ENCODE measurements at regions of chr5 and their contacts with region 1.

Region 1: GRCh38 chr5:3595006-3595961 is at the start of gene IRX1:
- DNase-seq: peak; percentile 80
- H3K4me3 Mint-ChIP-seq: peak within 1 kb of the TSS; percentile 79
- H3K27ac Mint-ChIP-seq: peak within 1 kb of the TSS; percentile 93
- H3K4me1 Mint-ChIP-seq: peaks cover 8% of the 10 kb centered on the region
- H3K27me3 Mint-ChIP-seq: no peaks in the 10 kb centered on the region
- CTCF ChIP-seq: no peak
- total RNA-seq, gene IRX1: 13.8 and 15.5 TPM in 2 replicates

Region 2: DNA sequence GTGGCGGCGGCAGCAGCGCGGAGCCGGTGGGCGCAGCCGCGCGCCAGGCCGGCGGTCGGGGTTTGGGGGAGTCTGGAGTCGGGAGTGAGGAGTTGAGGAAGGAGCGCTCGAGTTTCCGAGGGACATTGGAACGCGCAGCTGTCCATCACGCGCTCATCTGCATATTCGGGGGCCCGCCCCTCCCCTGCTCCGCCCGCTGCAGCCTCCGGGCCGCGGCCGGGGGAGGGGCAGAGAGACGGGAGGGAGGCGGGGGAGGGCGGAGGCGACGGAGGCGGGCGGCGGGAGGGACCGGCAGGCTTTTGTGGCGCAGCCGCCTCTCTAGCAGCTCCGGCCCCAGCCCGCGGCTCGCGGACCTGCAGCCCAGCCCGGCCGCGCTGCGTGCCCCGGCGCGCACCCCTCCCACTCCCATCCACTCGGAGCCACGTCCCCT is 843.7 kb before region 1 on chr5 and contains the start of gene IRX2:
- CTCF ChIA-PET with region 1: no interaction called
- POLR2A ChIA-PET with region 1: interaction called, 43 read pairs
- intact Hi-C with region 1: loop called (anchors 2 kb)
- DNase-seq: peak; percentile 97
- H3K4me3 Mint-ChIP-seq: peak within 1 kb of the TSS; percentile 82
- H3K27ac Mint-ChIP-seq: peak within 1 kb of the TSS; percentile 95
- H3K4me1 Mint-ChIP-seq: peaks cover 12% of the 10 kb centered on the region
- H3K27me3 Mint-ChIP-seq: no peaks in the 10 kb centered on the region
- CTCF ChIP-seq: no peak
- total RNA-seq, gene IRX2: 35.4 and 43.4 TPM in 2 replicates

Region 3: GRCh38 chr5:3310541-3311261 is 284.6 kb before region 1 on chr5:
- CTCF ChIA-PET with region 1: no interaction called
- POLR2A ChIA-PET with region 1: interaction called, 3 read pairs
- intact Hi-C with region 1: loop called (anchors 5 kb)
- DNase-seq: peak; percentile 93
- H3K4me3 Mint-ChIP-seq: peak overlapping the region; percentile 65
- H3K27ac Mint-ChIP-seq: peak overlapping the region; percentile 97
- H3K4me1 Mint-ChIP-seq: peaks cover 24% of the 10 kb centered on the region
- H3K27me3 Mint-ChIP-seq: no peaks in the 10 kb centered on the region
- CTCF ChIP-seq: no peak

Region 4: DNA sequence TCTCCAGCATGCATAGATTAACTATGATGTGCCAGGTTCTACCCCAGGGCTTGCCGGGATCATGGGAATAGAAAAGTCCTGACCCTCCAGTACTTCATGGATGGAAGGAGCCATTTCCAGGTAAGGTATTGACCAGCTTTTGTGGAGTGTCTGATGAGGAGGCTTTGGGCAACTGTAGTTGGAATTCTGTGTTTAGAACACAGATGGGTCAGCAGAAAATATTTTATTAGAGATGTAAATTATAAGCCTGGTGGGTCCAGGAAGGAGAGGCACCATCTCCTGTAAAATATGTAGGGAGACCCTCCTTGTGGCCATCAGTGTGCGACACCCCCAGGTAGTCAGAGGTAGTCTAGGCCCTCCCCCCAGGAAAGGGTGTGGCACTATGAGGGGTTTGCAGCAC is 156.6 kb after region 1 on chr5:
- CTCF ChIA-PET with region 1: no interaction called
- POLR2A ChIA-PET with region 1: no interaction called
- intact Hi-C with region 1: no loop called
- DNase-seq: no peak
- H3K4me3 Mint-ChIP-seq: no peak overlapping the region
- H3K27ac Mint-ChIP-seq: no peak overlapping the region
- H3K4me1 Mint-ChIP-seq: no peaks in the 10 kb centered on the region
- H3K27me3 Mint-ChIP-seq: no peaks in the 10 kb centered on the region
- CTCF ChIP-seq: no peak

Region 5: GRCh38 chr5:4511996-4512662 is 916.8 kb after region 1 on chr5:
- CTCF ChIA-PET with region 1: no interaction called
- POLR2A ChIA-PET with region 1: interaction called, 3 read pairs
- intact Hi-C with region 1: loop called (anchors 5 kb)
- DNase-seq: peak; percentile 54
- H3K4me3 Mint-ChIP-seq: peak overlapping the region; percentile 69
- H3K27ac Mint-ChIP-seq: no peak overlapping the region
- H3K4me1 Mint-ChIP-seq: peaks cover 6% of the 10 kb centered on the region
- H3K27me3 Mint-ChIP-seq: no peaks in the 10 kb centered on the region
- CTCF ChIP-seq: peak; percentile 61

Region 6: DNA sequence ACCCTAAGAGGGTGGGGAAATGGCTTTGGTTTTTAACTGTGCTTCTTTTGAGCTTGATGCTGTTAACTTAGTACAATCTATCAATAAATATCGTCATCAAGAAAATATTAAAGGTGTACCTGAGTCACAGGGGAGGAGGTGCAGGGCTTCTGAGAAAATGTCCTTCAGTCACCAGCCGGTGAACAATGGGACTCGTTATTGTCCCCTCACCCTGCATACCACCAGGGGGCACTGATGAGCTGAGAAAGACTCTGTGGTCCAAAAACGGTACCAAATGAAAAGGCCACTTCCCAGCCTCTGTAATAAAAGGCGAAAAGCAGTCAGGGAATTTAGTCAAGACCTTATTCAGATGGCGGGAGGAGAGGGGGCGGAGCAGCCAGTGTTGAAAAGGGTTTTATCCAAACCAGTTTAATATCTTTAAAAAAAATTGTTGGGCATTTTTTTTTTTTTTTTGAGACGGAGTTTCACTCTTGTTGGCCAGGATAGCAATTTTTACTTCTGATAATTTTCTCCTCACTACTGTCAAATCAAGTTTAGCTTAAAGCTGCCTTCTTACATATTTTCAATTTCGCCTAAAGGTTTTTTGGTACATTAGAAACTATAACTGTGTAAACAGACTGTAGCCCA is 1272.9 kb after region 1 on chr5:
- CTCF ChIA-PET with region 1: no interaction called
- POLR2A ChIA-PET with region 1: no interaction called
- intact Hi-C with region 1: loop called (anchors 10 kb)
- DNase-seq: peak; percentile 71
- H3K4me3 Mint-ChIP-seq: peak overlapping the region; percentile 35
- H3K27ac Mint-ChIP-seq: no peak overlapping the region
- H3K4me1 Mint-ChIP-seq: peaks cover 8% of the 10 kb centered on the region
- H3K27me3 Mint-ChIP-seq: no peaks in the 10 kb centered on the region
- CTCF ChIP-seq: peak; percentile 81

Measured in MCF 10A (cell line).